ENCODE measurements at regions of chr3 and their contacts with region 1.

Region 1: DNA sequence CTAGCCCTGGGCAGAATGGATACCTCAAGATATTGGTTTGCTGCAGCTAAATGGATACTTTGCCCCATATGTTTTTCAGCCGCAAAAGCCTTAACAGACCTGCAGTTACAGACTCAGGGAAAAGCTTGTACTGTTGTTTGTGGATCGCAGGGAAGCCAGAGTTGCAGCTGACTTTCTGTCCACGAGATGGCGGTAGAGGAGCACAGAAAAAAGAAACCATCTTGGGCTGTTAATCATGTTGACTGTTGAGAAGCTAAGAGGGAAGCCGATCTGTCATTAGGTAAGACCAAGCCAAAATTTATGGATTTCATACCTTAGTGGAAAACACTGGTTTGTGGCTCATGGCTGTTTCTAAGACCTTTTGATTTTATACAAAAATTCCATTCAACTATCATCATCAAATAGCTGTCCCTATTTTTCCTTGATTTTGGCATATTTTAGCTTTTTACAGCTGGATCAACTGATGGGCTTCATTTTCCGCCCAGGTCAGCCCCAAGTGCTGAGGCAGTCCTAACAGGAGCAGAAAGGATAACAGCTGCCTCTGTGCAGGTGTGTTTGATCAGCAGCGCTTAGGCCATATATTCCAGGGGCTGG is 205.7 kb upstream of the ZPLD1 start:
- DNase-seq: peak; percentile 62
- ATAC-seq: peak; percentile 56
- H3K4me3 Mint-ChIP-seq: no peak overlapping the region
- H3K27ac Mint-ChIP-seq: no peak overlapping the region
- H3K4me1 Mint-ChIP-seq: peaks cover 54% of the 10 kb centered on the region
- H3K27me3 Mint-ChIP-seq: no peaks in the 10 kb centered on the region
- CTCF ChIP-seq: no peak

Region 2: GRCh38 chr3:101544161-101544850 is 684.9 kb before region 1 on chr3:
- CTCF ChIA-PET with region 1: no interaction called
- POLR2A ChIA-PET with region 1: no interaction called
- intact Hi-C with region 1: no loop called
- DNase-seq: no peak
- ATAC-seq: no peak
- H3K4me3 Mint-ChIP-seq: no peak overlapping the region
- H3K27ac Mint-ChIP-seq: no peak overlapping the region
- H3K4me1 Mint-ChIP-seq: no peaks in the 10 kb centered on the region
- H3K27me3 Mint-ChIP-seq: peaks cover 13% of the 10 kb centered on the region
- CTCF ChIP-seq: no peak

Region 3: GRCh38 chr3:101809178-101810021 is 419.8 kb before region 1 on chr3:
- CTCF ChIA-PET with region 1: interaction called, 847 read pairs
- POLR2A ChIA-PET with region 1: interaction called, 31 read pairs
- intact Hi-C with region 1: loop called (anchors 1 kb)
- DNase-seq: no peak
- ATAC-seq: peak; percentile 82
- H3K4me3 Mint-ChIP-seq: no peak overlapping the region
- H3K27ac Mint-ChIP-seq: no peak overlapping the region
- H3K4me1 Mint-ChIP-seq: peaks cover 37% of the 10 kb centered on the region
- H3K27me3 Mint-ChIP-seq: no peaks in the 10 kb centered on the region
- CTCF ChIP-seq: peak; percentile 59

Region 4: GRCh38 chr3:101861212-101861788 is 367.9 kb before region 1 on chr3:
- CTCF ChIA-PET with region 1: interaction called, 19 read pairs
- POLR2A ChIA-PET with region 1: interaction called, 17 read pairs
- intact Hi-C with region 1: no loop called
- DNase-seq: no peak
- ATAC-seq: peak; percentile 64
- H3K4me3 Mint-ChIP-seq: peak overlapping the region; percentile 51
- H3K27ac Mint-ChIP-seq: peak overlapping the region; percentile 75
- H3K4me1 Mint-ChIP-seq: peaks cover 76% of the 10 kb centered on the region
- H3K27me3 Mint-ChIP-seq: no peaks in the 10 kb centered on the region
- CTCF ChIP-seq: no peak

Region 5: DNA sequence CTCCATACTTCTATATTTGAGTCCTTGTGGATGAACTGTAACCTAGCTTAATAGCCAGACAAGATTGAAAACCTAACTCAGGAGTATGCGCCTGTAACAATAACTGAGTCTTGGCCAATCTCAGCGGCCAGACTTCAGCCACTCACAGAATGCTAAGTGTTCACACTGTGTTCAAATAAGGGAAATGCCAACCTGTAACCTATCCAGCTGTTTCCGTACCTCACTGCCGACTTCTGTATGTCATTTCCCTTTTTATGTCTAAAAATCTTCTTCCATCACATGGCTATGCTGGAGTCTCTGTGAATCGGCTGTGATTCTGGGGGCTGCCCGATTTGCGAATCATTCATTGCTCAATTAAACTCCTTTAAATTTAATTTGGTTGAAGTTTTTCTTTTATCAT is 210.6 kb before region 1 on chr3:
- CTCF ChIA-PET with region 1: interaction called, 11 read pairs
- POLR2A ChIA-PET with region 1: interaction called, 3 read pairs
- intact Hi-C with region 1: no loop called
- DNase-seq: no peak
- ATAC-seq: peak; percentile 82
- H3K4me3 Mint-ChIP-seq: peak overlapping the region; percentile 15
- H3K27ac Mint-ChIP-seq: peak overlapping the region; percentile 76
- H3K4me1 Mint-ChIP-seq: peaks cover 44% of the 10 kb centered on the region
- H3K27me3 Mint-ChIP-seq: no peaks in the 10 kb centered on the region
- CTCF ChIP-seq: no peak

Region 6: DNA sequence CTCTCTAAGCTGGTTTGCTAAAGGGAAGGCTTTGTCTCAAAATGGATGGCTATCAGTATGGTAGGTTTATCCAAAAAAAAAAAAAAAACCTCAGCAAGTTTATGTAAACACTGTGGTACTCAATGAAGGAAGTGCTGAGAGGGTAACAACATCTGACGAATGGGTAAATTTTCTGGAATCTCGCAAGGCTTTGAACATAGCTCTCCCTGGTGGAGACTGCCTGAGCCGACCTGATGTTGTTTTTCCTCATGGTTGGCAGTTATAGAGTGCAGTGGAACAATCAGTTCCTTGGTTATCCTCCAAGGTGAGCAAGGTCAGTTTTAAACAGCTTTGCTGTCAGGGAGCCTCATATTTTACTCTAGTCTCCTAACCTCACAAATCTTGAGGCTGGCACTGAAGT is 300.3 kb after region 1 on chr3:
- CTCF ChIA-PET with region 1: interaction called, 41 read pairs
- POLR2A ChIA-PET with region 1: no interaction called
- intact Hi-C with region 1: no loop called
- DNase-seq: no peak
- ATAC-seq: no peak
- H3K4me3 Mint-ChIP-seq: no peak overlapping the region
- H3K27ac Mint-ChIP-seq: no peak overlapping the region
- H3K4me1 Mint-ChIP-seq: peaks cover 10% of the 10 kb centered on the region
- H3K27me3 Mint-ChIP-seq: peaks cover 14% of the 10 kb centered on the region
- CTCF ChIP-seq: no peak